CD8-positive, alpha-beta T cell (primary cell): ENCODE measurements at regions of chr15 and their contacts with region 1.

Region 1: DNA sequence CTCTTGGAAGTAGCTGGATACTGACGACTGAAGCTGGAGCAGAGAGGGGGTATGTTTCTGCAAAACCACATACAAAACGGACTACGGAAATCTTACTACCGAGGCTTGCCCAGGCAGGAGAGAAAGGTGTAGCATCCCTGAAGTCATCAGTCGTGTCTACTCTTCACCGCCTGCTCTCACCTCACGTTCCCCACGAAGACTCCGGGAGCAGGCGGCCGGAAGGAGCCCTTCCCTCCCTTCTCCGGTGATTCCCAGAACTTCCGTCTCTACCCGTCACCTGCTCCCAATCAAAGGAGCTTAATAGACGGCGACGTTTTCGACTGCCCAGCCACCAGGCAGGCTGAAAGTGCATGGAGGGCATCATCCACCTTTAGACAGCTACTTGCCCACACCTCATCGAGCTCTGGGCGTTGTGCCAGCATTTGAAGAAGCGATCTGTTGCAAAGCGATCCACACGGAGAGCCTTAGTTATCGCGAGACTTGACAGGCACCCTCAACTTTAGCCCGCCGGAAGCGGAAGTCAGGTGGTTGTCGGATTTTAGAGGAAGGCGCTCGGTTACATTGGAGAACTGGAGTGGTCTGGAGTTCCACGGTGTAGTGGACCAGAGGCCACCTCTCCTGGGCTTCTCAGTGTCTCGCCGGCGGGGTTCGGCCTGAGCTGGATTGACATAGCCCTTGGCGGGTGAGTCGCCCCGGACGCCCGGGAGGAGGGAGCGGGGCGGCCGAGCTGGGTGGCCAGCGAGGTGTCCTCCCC is at the start of gene RAMAC:
- DNase-seq: peak; percentile 85 to 98 (median 93)
- ATAC-seq: peak; percentile 93
- H3K4me3 ChIP-seq: peak within 1 kb of the TSS; percentile 76 to 92
- H3K4me3 Mint-ChIP-seq: peak within 1 kb of the TSS; percentile 97
- H3K27ac ChIP-seq: peak within 1 kb of the TSS; percentile 67 to 81
- H3K27ac Mint-ChIP-seq: peak within 1 kb of the TSS; percentile 96
- H3K4me1 ChIP-seq: peaks cover 18% of the 10 kb centered on the region
- H3K4me1 Mint-ChIP-seq: peaks cover 31% of the 10 kb centered on the region
- H3K27me3 ChIP-seq: no peaks in the 10 kb centered on the region
- H3K27me3 Mint-ChIP-seq: no peaks in the 10 kb centered on the region
- CTCF ChIP-seq: no peak
- total RNA-seq, gene RAMAC: 27.7 to 32.4 TPM

Region 2: DNA sequence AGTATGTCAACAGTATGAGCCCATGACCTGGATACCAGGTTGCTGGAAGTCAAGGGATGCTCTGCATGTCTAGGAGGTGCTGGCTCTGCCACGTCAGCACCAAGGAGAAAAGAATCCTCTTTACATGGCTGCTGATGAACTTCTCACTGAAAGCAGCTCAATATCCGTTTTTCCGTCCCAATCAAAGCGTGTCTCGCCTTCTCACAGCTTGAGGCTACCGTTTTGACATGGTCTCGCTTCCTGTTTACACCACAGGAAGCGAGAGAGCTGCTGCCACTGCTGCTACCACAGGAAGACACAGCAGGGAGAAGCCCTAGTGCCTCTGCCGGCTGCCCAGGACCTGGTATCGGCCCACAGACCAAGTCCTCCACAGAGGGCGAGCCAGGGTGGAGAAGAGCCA is 1689.2 kb before region 1 on chr15:
- CTCF ChIA-PET with region 1: no interaction called
- POLR2A ChIA-PET with region 1: no interaction called
- intact Hi-C with region 1: loop called in 1 of 2 experiments (anchors 5 kb)
- DNase-seq: peak; percentile 50 to 94 (median 79)
- ATAC-seq: peak; percentile 46
- H3K4me3 ChIP-seq: peak overlapping the region; percentile 88 to 89
- H3K4me3 Mint-ChIP-seq: peak overlapping the region; percentile 92
- H3K27ac ChIP-seq: peak overlapping the region; percentile 84 to 92
- H3K27ac Mint-ChIP-seq: peak overlapping the region; percentile 98
- H3K4me1 ChIP-seq: peaks cover 55% of the 10 kb centered on the region
- H3K4me1 Mint-ChIP-seq: peaks cover 72% of the 10 kb centered on the region
- H3K27me3 ChIP-seq: no peaks in the 10 kb centered on the region
- H3K27me3 Mint-ChIP-seq: no peaks in the 10 kb centered on the region
- CTCF ChIP-seq: no peak

Region 3: DNA sequence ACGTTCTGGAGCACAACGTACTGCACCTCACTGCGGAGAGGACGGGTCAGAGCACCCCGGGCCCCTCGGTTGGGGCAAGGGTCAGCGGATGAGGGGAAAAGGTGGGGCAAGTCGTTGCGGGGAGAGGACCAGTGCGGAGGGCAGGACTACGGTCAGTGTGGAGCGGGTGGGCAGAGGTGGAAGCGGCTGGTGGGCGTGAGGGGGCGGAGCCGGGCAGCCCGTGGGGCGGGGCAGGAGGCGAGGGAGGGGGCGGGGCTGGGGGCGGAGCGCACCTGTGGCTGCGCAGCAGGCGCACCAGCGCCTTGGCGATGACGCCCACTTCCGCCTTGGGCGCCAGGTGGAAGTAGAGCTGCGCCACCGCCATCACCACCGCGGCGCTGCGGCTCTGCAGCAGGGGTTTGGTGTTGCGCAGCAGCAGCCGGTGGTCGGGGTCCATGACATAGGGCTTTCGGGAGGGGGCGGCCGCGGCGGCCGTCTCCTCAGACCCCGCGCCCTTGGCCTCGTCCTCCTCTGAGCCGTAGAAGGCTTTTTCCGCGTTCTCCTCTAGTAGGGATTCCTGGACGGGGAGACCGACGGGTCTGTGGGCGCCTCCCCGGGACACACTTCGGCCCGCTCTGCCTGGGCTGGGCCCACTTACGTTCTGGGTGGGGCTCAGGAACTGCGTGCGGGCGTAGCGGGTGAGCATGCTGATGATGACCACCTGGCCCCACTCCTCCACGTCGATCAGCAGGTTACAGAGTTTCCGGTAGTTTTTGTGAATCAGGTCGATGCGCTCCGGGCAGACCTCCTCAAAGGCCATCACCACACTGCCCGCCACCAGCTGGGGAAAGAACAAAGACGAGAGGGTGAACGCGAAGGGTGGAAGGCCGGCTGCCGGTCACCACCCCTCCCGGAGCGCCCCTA is 305.4 kb before region 1 on chr15:
- CTCF ChIA-PET with region 1: no interaction called
- POLR2A ChIA-PET with region 1: interaction called, 3 read pairs
- intact Hi-C with region 1: loop called in 1 of 2 experiments (anchors 10 kb)
- DNase-seq: peak; percentile 65 to 92 (median 82)
- ATAC-seq: peak; percentile 95
- H3K4me3 ChIP-seq: peak overlapping the region; percentile 71 to 81
- H3K4me3 Mint-ChIP-seq: peak overlapping the region; percentile 91
- H3K27ac ChIP-seq: peak overlapping the region; percentile 68 to 76
- H3K27ac Mint-ChIP-seq: peak overlapping the region; percentile 96
- H3K4me1 ChIP-seq: peaks cover 12% of the 10 kb centered on the region
- H3K4me1 Mint-ChIP-seq: peaks cover 13% of the 10 kb centered on the region
- H3K27me3 ChIP-seq: peaks cover 0 to 3% of the 10 kb centered on the region in 2 experiments
- H3K27me3 Mint-ChIP-seq: no peaks in the 10 kb centered on the region
- CTCF ChIP-seq: peak; percentile 25

Region 4: GRCh38 chr15:82749951-82750830 is 235.7 kb before region 1 on chr15:
- CTCF ChIA-PET with region 1: no interaction called
- POLR2A ChIA-PET with region 1: no interaction called
- intact Hi-C with region 1: loop called (anchors 1 to 5 kb)
- DNase-seq: peak; percentile 50 to 91 (median 85)
- ATAC-seq: peak; percentile 94
- H3K4me3 ChIP-seq: peak overlapping the region; percentile 73 to 83
- H3K4me3 Mint-ChIP-seq: peak overlapping the region; percentile 100
- H3K27ac ChIP-seq: peak overlapping the region; percentile 52 to 76
- H3K27ac Mint-ChIP-seq: peak overlapping the region; percentile 99
- H3K4me1 ChIP-seq: peaks cover 21% of the 10 kb centered on the region
- H3K4me1 Mint-ChIP-seq: peaks cover 55% of the 10 kb centered on the region
- H3K27me3 ChIP-seq: no peaks in the 10 kb centered on the region
- H3K27me3 Mint-ChIP-seq: no peaks in the 10 kb centered on the region
- CTCF ChIP-seq: no peak

Region 5: DNA sequence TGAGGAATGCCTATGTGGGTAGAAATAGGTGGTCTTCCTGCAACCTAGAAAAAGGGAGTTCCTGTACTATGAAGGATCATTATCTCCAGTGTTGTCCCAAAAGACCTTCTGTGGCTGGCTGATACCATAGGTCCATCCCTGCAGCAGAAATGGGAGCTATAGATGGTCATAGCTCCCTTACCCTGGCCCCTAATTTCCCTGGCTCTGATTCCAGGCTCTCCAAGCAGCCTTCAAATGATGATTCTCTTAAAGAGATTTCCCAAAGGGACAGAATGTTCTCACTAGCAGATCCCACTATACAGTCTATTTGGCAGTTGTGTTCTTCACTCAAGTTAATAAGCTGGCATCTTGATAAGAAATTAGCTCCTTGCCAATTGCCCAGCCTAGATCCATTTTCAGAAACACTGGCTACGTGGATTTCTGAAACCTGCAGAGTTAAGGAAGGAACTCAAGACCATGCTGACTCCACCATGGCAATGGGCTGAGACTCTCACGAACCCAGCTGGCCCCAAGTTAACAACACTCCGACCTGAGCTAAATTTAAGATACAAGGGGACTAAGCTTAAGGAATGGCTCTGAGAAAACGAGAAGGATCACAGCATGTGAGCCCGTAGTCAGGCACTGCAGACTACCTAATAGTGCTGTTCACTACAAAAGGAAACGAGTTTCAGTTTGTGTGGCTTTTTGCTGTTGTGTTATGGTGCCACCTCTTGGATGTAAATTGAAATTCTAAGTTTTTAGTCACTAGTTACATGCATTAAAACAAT is 14.2 kb after region 1 on chr15:
- CTCF ChIA-PET with region 1: interaction called, 12 read pairs
- POLR2A ChIA-PET with region 1: interaction called, 4 read pairs
- intact Hi-C with region 1: loop called (anchors 2 kb)
- DNase-seq: peak in 5 of 9 experiments; percentile 26 to 73 (median 27)
- ATAC-seq: peak; percentile 97
- H3K4me3 ChIP-seq: peak overlapping the region; percentile 24 to 29
- H3K4me3 Mint-ChIP-seq: peak overlapping the region; percentile 81
- H3K27ac ChIP-seq: peak overlapping the region; percentile 24 to 54
- H3K27ac Mint-ChIP-seq: peak overlapping the region; percentile 84
- H3K4me1 ChIP-seq: peaks cover 9% of the 10 kb centered on the region
- H3K4me1 Mint-ChIP-seq: peaks cover 12% of the 10 kb centered on the region
- H3K27me3 ChIP-seq: no peaks in the 10 kb centered on the region
- H3K27me3 Mint-ChIP-seq: no peaks in the 10 kb centered on the region
- CTCF ChIP-seq: peak; percentile 63

Region 6: GRCh38 chr15:83066734-83067637 is 81.1 kb after region 1 on chr15 and contains the start of gene BTBD1:
- CTCF ChIA-PET with region 1: no interaction called
- POLR2A ChIA-PET with region 1: no interaction called
- intact Hi-C with region 1: loop called in 1 of 2 experiments (anchors 1 kb)
- DNase-seq: peak; percentile 44 to 89 (median 75)
- ATAC-seq: peak; percentile 78
- H3K4me3 ChIP-seq: peak within 1 kb of the TSS; percentile 77 to 84
- H3K4me3 Mint-ChIP-seq: peak within 1 kb of the TSS; percentile 87
- H3K27ac ChIP-seq: peak within 1 kb of the TSS; percentile 65 to 78
- H3K27ac Mint-ChIP-seq: peak within 1 kb of the TSS; percentile 77
- H3K4me1 ChIP-seq: peaks cover 42% of the 10 kb centered on the region
- H3K4me1 Mint-ChIP-seq: peaks cover 26% of the 10 kb centered on the region
- H3K27me3 ChIP-seq: no peaks in the 10 kb centered on the region
- H3K27me3 Mint-ChIP-seq: no peaks in the 10 kb centered on the region
- CTCF ChIP-seq: no peak
- total RNA-seq, gene BTBD1: 32.5 to 33.6 TPM